Body of pancreas (tissue), 4 donors: ENCODE measurements at regions of chr7 and their contacts with region 1.

Region 1: DNA sequence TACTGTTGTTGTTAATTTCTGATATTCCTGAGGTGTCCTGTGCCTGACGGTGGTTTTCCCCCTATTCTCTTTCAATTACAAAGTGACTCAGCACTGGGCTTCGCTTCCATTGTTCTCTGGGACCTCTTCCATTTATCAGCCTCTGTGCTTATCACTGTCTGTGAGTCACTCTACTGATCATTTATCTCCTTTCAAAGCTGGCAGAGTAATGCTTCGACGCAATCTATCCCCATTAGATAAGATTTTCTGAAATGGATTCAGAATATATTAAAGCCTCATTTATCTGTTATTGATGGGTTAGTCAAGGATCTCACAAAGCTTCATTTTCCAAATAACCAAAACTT is 679.2 kb downstream of the SDK1 start:
- DNase-seq: no peak
- ATAC-seq: no peak
- H3K4me3 ChIP-seq: no peak overlapping the region
- H3K27ac ChIP-seq: no peak overlapping the region
- H3K4me1 ChIP-seq: no peaks in the 10 kb centered on the region
- H3K27me3 ChIP-seq: no peaks in the 10 kb centered on the region
- CTCF ChIP-seq: no peak
- POLR2A ChIP-seq: no peak

Region 2: GRCh38 chr7:4042402-4043045 is 62.3 kb after region 1 on chr7:
- intact Hi-C with region 1: loop called (anchors 10 kb)
- DNase-seq: no peak
- ATAC-seq: no peak
- H3K4me3 ChIP-seq: no peak overlapping the region
- H3K27ac ChIP-seq: no peak overlapping the region
- H3K4me1 ChIP-seq: no peaks in the 10 kb centered on the region
- H3K27me3 ChIP-seq: no peaks in the 10 kb centered on the region
- CTCF ChIP-seq: no peak
- POLR2A ChIP-seq: no peak